ENCODE measurements at regions of chrX and their contacts with region 1.

Region 1: GRCh38 chrX:130196466-130196865 is 24.7 kb downstream of the RAB33A start:
- DNase-seq: no peak
- ATAC-seq: no peak
- H3K4me3 ChIP-seq: no peak overlapping the region
- H3K4me3 Mint-ChIP-seq: no peak overlapping the region
- H3K27ac ChIP-seq: no peak overlapping the region
- H3K27ac Mint-ChIP-seq: peak overlapping the region in 1 of 9 donors; percentile 38
- H3K4me1 ChIP-seq: no peaks in the 10 kb centered on the region
- H3K4me1 Mint-ChIP-seq: peaks cover 0 to 4% (median 0%) of the 10 kb centered on the region in 7 donors
- H3K27me3 ChIP-seq: no peaks in the 10 kb centered on the region
- H3K27me3 Mint-ChIP-seq: no peaks in the 10 kb centered on the region

Region 2: DNA sequence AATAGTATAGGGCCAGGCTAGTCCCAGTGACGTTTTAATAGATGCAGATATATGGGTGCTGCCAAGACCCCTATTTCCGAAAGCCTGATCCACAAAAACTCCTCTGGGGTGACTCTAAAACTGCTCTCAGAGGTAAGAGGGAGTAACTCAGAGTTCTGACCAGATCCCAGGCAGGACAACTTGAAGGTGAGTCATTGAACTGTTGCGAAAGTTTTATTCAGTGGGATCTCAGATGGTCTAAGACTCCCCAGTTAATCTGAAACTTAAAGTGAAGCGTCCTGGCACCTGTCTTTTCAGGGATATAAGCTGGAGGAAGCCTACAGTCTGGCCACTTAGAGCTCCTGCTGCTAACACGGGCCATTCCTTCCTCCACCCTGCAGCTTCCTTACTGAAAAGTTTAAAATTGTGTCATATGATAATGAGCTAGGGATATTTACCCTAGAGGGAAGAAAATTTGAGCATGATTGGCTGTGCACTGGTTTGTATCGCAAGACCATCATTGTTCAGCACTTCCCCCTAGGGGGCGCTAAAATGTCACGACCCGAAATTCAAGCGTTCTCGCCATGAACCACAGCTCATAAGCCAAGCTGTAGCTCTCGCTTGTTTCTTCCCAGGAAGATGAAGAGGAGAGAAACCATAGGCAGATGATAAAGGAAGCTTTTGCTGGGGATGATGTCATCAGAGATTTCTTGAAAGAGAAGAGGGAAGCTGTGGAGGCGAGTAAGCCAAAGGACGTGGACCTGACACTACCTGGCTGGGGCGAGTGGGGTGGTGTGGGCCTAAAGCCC is 271.0 kb before region 1 on chrX:
- CTCF ChIA-PET with region 1: no interaction called
- POLR2A ChIA-PET with region 1: no interaction called
- intact Hi-C with region 1: loop called in 1 of 2 experiments (anchors 1 kb)
- DNase-seq: peak; percentile 18 to 74 (median 67)
- ATAC-seq: peak; percentile 89
- H3K4me3 ChIP-seq: no peak overlapping the region
- H3K4me3 Mint-ChIP-seq: no peak overlapping the region
- H3K27ac ChIP-seq: no peak overlapping the region
- H3K27ac Mint-ChIP-seq: peak overlapping the region in 1 of 9 donors; percentile 41
- H3K4me1 ChIP-seq: no peaks in the 10 kb centered on the region
- H3K4me1 Mint-ChIP-seq: peaks cover 0 to 5% (median 0%) of the 10 kb centered on the region in 7 donors
- H3K27me3 ChIP-seq: no peaks in the 10 kb centered on the region
- H3K27me3 Mint-ChIP-seq: no peaks in the 10 kb centered on the region

Region 3: DNA sequence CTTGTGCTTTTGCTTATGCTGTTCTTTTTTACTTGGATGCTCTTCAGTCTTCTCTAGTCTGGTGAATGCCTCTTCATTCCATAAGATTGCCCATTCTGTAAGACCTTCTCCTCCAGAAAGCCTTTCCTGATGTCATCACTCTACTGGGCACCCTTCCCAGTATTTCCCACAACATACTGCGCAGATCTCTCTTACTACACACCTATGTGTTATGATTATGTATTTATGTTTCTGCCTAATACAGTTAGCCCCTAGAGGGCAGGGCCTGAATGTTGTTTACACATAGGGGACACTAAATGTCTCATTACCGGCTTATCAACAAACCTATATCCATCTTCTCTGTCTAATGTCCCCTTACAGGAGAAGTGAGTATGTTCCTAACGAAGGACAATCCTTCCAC is 52.0 kb before region 1 on chrX:
- CTCF ChIA-PET with region 1: interaction called, 3 read pairs
- POLR2A ChIA-PET with region 1: interaction called, 3 read pairs
- intact Hi-C with region 1: loop called (anchors 1 to 5 kb)
- DNase-seq: no peak
- ATAC-seq: no peak
- H3K4me3 ChIP-seq: no peak overlapping the region
- H3K4me3 Mint-ChIP-seq: no peak overlapping the region
- H3K27ac ChIP-seq: no peak overlapping the region
- H3K27ac Mint-ChIP-seq: peak overlapping the region in 2 of 9 donors; percentile 7 to 28
- H3K4me1 ChIP-seq: no peaks in the 10 kb centered on the region
- H3K4me1 Mint-ChIP-seq: peaks cover 0 to 6% (median 0%) of the 10 kb centered on the region in 7 donors
- H3K27me3 ChIP-seq: no peaks in the 10 kb centered on the region
- H3K27me3 Mint-ChIP-seq: no peaks in the 10 kb centered on the region

Region 4: GRCh38 chrX:130173190-130173895 is 23.1 kb before region 1 on chrX:
- CTCF ChIA-PET with region 1: interaction called, 4 read pairs
- POLR2A ChIA-PET with region 1: interaction called, 4 read pairs
- intact Hi-C with region 1: loop called in 1 of 2 experiments (anchors 1 kb)
- DNase-seq: peak in 2 of 9 donors; percentile 16 to 35
- ATAC-seq: peak; percentile 31
- H3K4me3 ChIP-seq: peak overlapping the region; percentile 82
- H3K4me3 Mint-ChIP-seq: peak overlapping the region; percentile 85 to 96 (median 92)
- H3K27ac ChIP-seq: peak overlapping the region; percentile 74
- H3K27ac Mint-ChIP-seq: peak overlapping the region; percentile 86 to 94 (median 88)
- H3K4me1 ChIP-seq: peaks cover 12 to 26% of the 10 kb centered on the region in 2 donors
- H3K4me1 Mint-ChIP-seq: peaks cover 8 to 52% (median 45%) of the 10 kb centered on the region in 7 donors
- H3K27me3 ChIP-seq: no peaks in the 10 kb centered on the region
- H3K27me3 Mint-ChIP-seq: no peaks in the 10 kb centered on the region

Region 5: DNA sequence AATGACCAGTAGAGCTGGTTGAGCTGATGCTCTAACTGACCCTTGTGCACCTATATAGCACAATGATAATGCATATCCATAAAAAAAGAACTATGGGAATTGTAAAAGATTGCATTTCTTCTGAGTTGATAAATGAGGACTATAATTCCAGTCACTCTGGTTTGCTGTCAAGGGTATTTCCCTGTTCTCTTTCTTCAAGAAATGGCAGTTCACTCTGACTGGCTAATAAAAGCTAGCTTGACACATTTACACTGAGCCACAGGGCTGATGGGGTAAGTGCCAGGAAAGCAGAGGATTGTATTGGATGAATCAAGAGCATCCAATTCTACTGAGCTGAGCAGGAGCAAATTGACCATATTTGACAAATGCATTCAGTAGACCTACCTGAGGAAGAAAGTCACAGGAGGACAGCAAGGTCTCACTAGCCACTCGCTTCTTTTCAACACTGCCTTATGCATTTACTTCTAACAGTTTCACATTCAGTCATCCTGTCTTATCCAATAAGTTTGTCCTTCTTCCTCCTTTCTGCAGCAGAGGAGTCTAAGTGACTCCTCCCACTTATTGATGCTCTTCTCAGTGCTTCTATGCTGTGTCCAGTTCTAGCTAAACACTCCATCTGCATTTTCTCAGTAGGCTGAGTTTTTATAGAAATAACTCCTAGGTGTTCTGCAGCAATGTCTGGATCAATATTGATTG is 248.3 kb after region 1 on chrX:
- CTCF ChIA-PET with region 1: no interaction called
- POLR2A ChIA-PET with region 1: no interaction called
- intact Hi-C with region 1: no loop called
- DNase-seq: no peak
- ATAC-seq: no peak
- H3K4me3 ChIP-seq: no peak overlapping the region
- H3K4me3 Mint-ChIP-seq: no peak overlapping the region
- H3K27ac ChIP-seq: no peak overlapping the region
- H3K27ac Mint-ChIP-seq: no peak overlapping the region
- H3K4me1 ChIP-seq: no peaks in the 10 kb centered on the region
- H3K4me1 Mint-ChIP-seq: no peaks in the 10 kb centered on the region
- H3K27me3 ChIP-seq: no peaks in the 10 kb centered on the region
- H3K27me3 Mint-ChIP-seq: peaks cover 0 to 9% (median 0%) of the 10 kb centered on the region in 5 donors